ENCODE measurements at regions of chr4 and their contacts with region 1.

Region 1: GRCh38 chr4:163544407-163545038 is 50.0 kb downstream of the TMA16 start:
- DNase-seq: peak; percentile 85
- H3K4me3 ChIP-seq: no peak overlapping the region
- H3K27ac ChIP-seq: no peak overlapping the region
- H3K4me1 ChIP-seq: no peaks in the 10 kb centered on the region
- H3K27me3 ChIP-seq: no peaks in the 10 kb centered on the region
- CTCF ChIP-seq: peak; percentile 97

Region 2: GRCh38 chr4:162497564-162498167 is 1046.9 kb before region 1 on chr4:
- CTCF ChIA-PET with region 1: interaction called, 3 read pairs
- POLR2A ChIA-PET with region 1: no interaction called
- intact Hi-C with region 1: loop called (anchors 1 kb)
- DNase-seq: peak; percentile 57
- H3K4me3 ChIP-seq: no peak overlapping the region
- H3K27ac ChIP-seq: no peak overlapping the region
- H3K4me1 ChIP-seq: no peaks in the 10 kb centered on the region
- H3K27me3 ChIP-seq: no peaks in the 10 kb centered on the region
- CTCF ChIP-seq: peak; percentile 76

Region 3: DNA sequence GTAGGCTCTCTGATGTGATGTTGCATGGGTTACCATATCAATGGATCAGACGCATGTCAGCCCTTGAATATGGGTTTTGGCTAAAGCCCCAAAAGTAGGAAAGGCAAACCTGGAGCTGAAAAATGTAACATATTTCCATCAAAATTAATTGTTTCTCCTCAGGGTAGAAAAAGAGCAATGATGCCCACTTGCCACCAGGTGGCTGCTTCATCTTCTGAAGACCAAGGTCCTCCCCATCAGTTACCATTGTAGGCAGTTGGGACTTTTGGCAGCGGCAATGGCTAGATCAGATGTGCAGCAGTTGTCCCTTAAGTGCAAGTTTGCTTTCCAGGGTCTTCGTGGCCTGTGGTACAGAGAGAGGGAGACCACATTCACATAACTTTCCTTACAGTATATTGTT is 496.1 kb before region 1 on chr4:
- CTCF ChIA-PET with region 1: interaction called, 3 read pairs
- POLR2A ChIA-PET with region 1: no interaction called
- intact Hi-C with region 1: loop called (anchors 5 kb)
- DNase-seq: peak; percentile 72
- H3K4me3 ChIP-seq: no peak overlapping the region
- H3K27ac ChIP-seq: no peak overlapping the region
- H3K4me1 ChIP-seq: no peaks in the 10 kb centered on the region
- H3K27me3 ChIP-seq: no peaks in the 10 kb centered on the region
- CTCF ChIP-seq: peak; percentile 65

Region 4: GRCh38 chr4:163243297-163243981 is 301.1 kb before region 1 on chr4:
- CTCF ChIA-PET with region 1: no interaction called
- POLR2A ChIA-PET with region 1: no interaction called
- intact Hi-C with region 1: loop called (anchors 10 kb)
- DNase-seq: no peak
- H3K4me3 ChIP-seq: no peak overlapping the region
- H3K27ac ChIP-seq: no peak overlapping the region
- H3K4me1 ChIP-seq: peaks cover 14% of the 10 kb centered on the region
- H3K27me3 ChIP-seq: no peaks in the 10 kb centered on the region
- CTCF ChIP-seq: no peak

Region 5: GRCh38 chr4:163484906-163485305 is 59.6 kb before region 1 on chr4:
- CTCF ChIA-PET with region 1: no interaction called
- POLR2A ChIA-PET with region 1: no interaction called
- intact Hi-C with region 1: loop called (anchors 1 kb)
- DNase-seq: peak; percentile 83
- H3K4me3 ChIP-seq: no peak overlapping the region
- H3K27ac ChIP-seq: no peak overlapping the region
- H3K4me1 ChIP-seq: peaks cover 13% of the 10 kb centered on the region
- H3K27me3 ChIP-seq: no peaks in the 10 kb centered on the region
- CTCF ChIP-seq: peak; percentile 85

Region 6: DNA sequence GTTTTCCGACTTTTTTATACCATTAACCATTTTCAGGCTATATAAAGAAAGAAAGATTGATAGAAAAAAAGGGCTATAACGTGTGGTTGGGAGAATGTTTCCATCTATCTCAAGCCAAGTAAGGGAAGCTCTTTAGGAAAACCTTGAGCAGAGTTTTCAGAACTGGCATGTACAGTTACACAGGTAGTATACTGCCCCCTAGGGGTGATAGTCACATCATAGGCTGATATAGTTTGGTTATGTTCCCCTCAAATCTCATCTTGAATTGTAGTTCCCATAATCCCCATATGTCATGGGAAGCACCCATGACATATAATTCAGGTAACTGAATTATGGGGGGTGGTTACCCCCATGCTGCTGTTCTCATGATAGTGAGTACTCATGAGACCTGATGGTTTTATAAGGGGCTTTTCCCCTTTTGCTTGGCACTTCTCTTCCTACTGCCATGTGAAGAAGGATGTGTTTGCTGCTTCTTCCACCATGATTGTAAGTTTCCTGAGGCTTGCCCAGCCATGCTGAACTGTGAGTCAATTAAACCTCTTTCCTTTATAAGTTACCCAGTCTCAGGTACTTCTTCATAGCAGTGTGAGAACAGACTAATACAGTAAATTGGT is 136.8 kb after region 1 on chr4:
- CTCF ChIA-PET with region 1: no interaction called
- POLR2A ChIA-PET with region 1: no interaction called
- intact Hi-C with region 1: no loop called
- DNase-seq: peak; percentile 70
- H3K4me3 ChIP-seq: no peak overlapping the region
- H3K27ac ChIP-seq: no peak overlapping the region
- H3K4me1 ChIP-seq: no peaks in the 10 kb centered on the region
- H3K27me3 ChIP-seq: no peaks in the 10 kb centered on the region
- CTCF ChIP-seq: peak; percentile 69